Sciatic nerve (tissue), 2 donors: ENCODE measurements at regions of chr9 and their contacts with region 1.

Region 1: DNA sequence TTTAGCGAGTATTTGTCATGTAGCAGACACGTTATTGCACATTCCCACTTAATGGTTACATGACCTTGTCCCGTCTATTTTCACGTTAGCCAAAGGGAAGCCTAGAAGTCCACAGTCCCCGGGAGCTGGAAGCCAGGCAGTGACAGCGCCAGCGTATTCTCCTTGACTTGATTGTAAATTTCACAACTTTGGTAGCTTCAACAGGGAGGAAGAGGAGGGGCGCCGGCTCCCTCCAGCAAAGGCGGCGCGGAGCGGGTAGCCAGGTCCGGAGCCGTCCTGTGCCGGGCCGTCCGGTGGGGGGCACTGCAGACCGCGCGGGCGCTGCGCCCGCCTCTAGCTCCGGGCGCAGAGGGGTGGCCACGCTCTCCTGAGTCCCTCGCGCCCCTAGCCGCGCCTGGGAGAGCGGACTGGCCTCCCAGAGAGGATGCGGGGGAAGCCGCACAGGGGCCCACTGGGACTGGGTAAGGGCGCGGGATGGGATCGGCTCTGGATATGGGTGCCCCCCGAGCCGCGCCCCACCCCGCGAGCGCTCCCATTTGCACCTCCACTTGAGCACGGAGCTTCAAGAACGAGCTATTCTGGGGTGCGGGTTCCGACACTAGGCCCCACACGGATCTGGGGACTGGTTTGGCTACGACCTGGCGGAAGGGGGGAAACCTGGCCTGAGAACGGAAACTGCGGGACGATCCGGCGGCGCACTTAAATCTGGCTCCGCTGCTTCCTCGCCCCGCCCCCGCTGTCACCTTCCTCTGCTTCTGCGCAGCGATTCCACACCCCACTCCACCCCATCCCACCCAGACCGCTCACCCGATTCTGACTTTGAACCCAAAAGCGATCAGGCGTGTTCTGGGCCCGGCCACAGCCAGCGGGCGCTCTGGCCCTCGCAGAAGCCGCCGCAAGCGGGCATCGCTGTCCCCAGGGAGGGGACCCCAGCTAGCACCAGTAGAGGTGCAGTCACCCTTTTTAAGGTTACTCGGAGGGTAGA is 23.8 kb downstream of the KLF4 start:
- DNase-seq: peak; percentile 83
- ATAC-seq: peak; percentile 99

Region 2: DNA sequence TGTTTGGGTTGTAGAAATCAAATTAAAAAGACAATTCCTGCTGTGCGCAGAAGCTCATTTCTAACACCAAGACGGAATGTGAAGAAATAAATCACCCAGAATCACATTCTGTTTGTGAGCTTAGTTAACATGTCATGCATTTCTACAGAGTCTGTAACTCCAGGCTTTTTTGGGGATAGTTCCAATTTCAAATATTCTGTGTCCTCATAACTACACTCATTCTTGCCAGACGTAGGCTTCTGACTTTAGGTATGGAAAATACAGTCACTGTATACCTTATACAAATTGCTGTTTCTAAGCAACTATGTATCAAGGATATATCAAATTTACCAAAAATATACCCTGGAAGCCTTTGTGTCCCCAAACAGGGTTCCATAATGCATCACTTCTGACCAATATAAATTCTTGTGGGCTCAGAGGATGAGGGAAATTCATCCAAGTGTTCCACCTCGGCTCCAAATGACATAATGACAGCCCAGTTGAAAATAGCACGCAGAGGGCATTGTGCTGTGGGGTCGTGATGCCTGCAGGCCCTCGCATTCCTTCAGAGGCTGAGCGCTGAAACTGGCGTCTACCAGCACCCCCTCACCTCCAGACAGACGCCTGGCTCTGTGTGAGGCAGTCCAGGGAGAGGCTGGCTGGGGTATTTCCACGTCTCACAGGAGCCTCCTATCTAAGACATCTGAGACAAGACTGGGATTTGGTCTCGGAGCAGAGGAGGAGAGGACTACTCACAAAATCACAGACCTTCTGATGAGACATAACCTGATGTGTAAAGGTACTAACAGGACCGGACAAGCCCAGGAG is 56.0 kb before region 1 on chr9:
- intact Hi-C with region 1: no loop called
- DNase-seq: no peak
- ATAC-seq: no peak

Region 3: GRCh38 chr9:107425101-107426045 is 40.4 kb before region 1 on chr9:
- intact Hi-C with region 1: no loop called
- DNase-seq: peak; percentile 91
- ATAC-seq: peak; percentile 95

Region 4: DNA sequence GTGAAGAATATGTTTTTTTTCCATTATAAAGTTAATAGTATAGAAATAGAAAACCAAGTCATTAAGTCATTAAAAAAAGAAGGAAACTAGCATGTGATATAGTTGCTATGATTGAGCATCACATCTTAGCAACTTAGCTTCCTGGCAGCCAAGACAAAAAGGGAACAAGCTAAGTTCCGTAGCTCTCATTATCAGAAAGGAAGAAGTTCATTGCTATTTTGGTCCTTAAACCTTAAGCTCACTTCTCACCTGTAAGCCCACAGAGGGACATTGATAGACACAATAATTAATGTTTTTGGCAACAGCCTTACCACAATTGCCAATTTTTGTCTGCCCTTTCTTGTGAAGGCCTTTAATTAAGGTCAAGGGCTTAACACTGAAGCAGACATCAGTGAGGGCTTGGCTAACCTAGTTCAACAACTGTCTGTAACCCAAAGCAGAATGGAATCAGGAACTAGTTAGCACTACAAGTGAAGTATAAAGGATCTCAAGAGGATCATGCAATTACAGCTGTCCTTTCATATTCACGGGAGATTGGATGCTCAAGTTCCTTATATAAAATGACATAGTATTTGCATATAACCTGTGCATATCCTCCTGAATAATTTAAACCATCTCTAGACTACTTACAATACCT is 47.8 kb after region 1 on chr9:
- intact Hi-C with region 1: no loop called
- DNase-seq: no peak
- ATAC-seq: no peak

Region 5: DNA sequence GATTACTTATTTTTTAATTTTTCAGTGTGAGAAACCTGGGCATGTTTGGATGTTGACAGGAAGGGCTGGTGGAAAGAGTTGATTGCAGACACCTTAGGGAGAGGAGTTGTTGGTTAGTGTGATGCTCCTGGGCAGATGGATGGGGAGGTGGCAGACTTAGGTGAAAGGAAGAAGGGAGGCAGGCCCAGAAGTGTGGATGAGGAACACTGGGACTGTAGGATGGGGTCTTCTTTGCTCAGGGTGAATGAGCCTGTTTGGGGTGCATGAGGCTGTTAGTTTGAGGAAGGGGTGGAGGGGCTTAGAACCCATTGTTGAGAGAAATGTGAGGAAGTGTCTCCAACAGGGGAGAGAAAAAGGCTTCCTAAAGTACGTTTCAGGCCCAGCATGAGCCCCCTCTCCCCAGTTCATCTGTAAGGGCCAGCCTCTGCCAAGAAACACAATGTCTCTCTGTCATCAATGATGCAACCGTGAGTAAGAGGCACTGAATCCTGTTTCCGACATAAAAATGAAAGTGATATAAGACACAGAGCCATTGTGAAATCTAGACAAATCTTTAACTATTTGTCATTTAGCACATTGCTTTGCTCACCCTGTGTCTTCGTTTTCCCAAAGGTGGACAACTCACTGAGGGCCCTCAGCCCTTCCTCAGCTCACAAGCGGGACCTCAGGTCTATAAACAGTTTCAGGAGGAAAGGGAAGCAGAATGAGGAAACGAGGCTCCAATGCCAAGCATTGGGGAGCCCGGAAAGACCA is 82.5 kb after region 1 on chr9:
- intact Hi-C with region 1: no loop called
- DNase-seq: no peak
- ATAC-seq: peak; percentile 97

Region 6: GRCh38 chr9:108565651-108566378 is 1100.1 kb after region 1 on chr9:
- intact Hi-C with region 1: loop called (anchors 10 kb)
- DNase-seq: no peak
- ATAC-seq: peak; percentile 96

Region 7: DNA sequence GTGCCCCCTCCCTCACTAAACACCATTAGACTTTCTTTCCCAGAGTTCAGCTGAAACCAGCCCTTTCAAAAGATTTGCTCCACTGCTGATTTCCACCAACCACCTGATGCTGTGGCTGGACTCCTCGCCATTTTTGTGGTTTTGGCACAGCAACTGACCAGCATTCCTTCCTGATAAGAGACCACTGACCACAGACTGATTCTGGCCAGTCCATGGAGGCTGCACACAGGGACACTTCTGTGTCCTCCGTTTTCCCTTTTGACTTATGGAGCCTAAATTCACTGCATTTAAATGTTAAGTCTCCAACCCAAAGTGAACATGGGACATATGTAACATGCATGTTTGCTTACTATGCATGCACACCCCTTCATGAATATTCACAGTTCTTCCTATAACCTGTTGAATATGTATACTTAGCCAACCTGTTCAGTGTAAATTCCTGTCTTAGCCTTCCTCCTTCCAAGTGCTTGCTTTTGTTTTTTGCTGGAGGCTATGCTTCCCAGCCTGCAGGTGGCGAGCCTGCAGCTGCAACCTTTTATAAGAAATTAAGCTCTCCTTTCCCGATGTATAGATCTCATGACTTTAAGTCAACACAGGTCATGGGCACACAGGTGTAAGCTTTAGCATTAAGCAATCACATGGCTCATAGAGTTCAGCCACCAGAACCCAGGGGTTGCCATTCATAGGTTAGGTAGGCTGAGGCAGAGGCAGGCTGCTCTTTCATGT is 1311.3 kb after region 1 on chr9:
- intact Hi-C with region 1: loop called (anchors 10 kb)
- DNase-seq: no peak
- ATAC-seq: no peak